ENCODE measurements at regions of chr5 and their contacts with region 1.

Region 1: DNA sequence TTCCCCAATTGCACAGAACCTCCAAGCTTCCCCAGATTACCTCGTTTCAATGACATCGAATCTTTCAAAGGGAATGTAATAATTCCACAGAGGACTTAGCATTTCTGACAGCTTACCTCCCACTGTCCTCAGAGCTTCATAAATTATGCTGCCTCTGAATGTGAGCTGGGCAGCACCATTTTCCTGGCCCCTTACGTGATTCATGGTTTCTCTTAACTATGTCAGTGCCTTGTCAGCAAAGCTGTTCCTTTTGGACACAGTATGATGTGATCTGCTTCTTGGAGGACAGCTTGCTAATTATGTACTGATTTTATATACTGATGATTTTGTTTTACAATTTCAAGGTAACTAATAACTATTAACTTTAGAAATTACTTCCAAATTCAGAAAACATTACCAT is 27.7 kb upstream of the SSBP2 start:
- DNase-seq: no peak
- ATAC-seq: no peak
- H3K4me3 ChIP-seq: 0 out of 4 replicates have a peak overlapping the region, but pooled peaks of 1 of the 2 experiments have one; percentile 1
- H3K27ac ChIP-seq: no peak overlapping the region; the same call in 1 of the 2 replicates
- H3K4me1 ChIP-seq: no peaks in the 10 kb centered on the region; the same call in 1 of the 2 replicates
- H3K27me3 ChIP-seq: no peaks in the 10 kb centered on the region
- CTCF ChIP-seq: no peak

Region 2: GRCh38 chr5:81425569-81425968 is 353.1 kb before region 1 on chr5:
- CTCF ChIA-PET with region 1: no interaction called
- POLR2A ChIA-PET with region 1: no interaction called
- in situ Hi-C with region 1: no loop called
- intact Hi-C with region 1: no loop called
- DNase-seq: no peak
- ATAC-seq: no peak
- H3K4me3 ChIP-seq: no peak overlapping the region
- H3K27ac ChIP-seq: no peak overlapping the region
- H3K4me1 ChIP-seq: peaks cover 27% of the 10 kb centered on the region
- H3K27me3 ChIP-seq: no peaks in the 10 kb centered on the region
- CTCF ChIP-seq: peak; percentile 61; the same call in 1 of the 2 replicates

Region 3: DNA sequence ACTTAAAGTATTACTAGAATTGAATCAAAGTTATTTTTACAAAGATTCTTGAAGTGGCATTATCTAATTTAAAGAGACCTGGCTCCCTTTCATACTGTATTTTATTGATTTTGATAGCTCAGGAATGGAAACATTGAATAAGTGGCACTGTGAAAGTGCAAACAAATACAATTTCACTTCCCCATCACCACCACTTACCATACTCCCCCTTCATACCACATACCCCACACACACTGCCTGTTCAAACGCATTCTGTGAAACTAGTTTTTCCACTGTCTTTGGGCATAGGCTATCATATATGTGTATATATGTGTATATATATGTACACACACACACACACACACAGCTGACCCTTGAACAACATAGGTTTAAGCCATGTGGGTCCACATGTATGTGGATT is 131.0 kb after region 1 on chr5:
- CTCF ChIA-PET with region 1: no interaction called
- POLR2A ChIA-PET with region 1: interaction called, 11 read pairs
- in situ Hi-C with region 1: no loop called
- intact Hi-C with region 1: no loop called
- DNase-seq: no peak
- ATAC-seq: no peak
- H3K4me3 ChIP-seq: no peak overlapping the region
- H3K27ac ChIP-seq: no peak overlapping the region
- H3K4me1 ChIP-seq: no peaks in the 10 kb centered on the region
- H3K27me3 ChIP-seq: no peaks in the 10 kb centered on the region
- CTCF ChIP-seq: no peak

Region 4: DNA sequence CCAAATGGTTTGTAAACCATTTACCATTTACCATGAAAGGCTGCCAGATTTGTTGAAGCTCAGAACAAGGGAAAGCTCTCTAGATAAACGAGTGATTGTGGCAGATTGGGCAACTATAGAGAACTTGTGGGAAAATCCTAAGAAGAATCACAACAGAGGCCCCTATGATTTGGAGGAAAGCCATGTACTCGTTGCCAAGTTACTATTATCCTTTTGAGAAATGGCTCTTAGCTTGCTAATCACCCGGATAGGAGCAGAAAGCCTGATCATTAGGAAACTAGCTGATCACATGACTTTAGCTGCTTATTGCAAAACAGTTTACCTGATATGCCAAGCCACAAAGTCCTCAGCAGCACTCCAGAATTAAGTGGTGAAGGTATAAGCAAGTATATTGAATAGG is 169.7 kb after region 1 on chr5:
- CTCF ChIA-PET with region 1: no interaction called
- POLR2A ChIA-PET with region 1: no interaction called
- in situ Hi-C with region 1: no loop called
- intact Hi-C with region 1: no loop called
- DNase-seq: no peak
- ATAC-seq: no peak
- H3K4me3 ChIP-seq: no peak overlapping the region
- H3K27ac ChIP-seq: no peak overlapping the region
- H3K4me1 ChIP-seq: no peaks in the 10 kb centered on the region
- H3K27me3 ChIP-seq: no peaks in the 10 kb centered on the region
- CTCF ChIP-seq: no peak

Measured in Panc1 (cell line).